CD4-positive, alpha-beta T cell (primary cell): ENCODE measurements at regions of chr6 and their contacts with region 1.

Region 1: DNA sequence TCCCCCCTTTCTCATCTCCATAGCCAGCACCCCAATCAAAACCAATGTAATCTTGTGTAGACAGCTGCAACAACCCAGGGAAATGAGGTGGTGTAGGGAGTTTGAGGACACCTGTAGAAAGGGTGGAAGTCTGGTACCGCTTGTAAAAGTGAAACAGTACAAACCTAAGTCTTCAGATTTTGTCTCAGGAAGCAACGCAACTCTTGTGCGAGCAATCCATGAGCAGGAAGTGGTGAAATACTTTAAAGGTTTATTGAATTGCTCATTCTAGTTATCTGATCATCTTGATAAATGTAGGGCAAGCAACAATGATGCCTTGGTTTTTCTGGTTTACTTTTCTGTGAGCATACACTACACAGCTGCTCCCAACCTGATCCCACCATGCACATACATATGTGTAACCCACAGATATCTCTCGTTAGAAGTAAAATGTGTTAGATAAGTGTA is 71.1 kb upstream of the THEMIS start:
- DNase-seq: peak; percentile 22 to 91 (median 42)
- ATAC-seq: peak; percentile 88
- H3K4me3 ChIP-seq: peak overlapping the region; percentile 53
- H3K4me3 Mint-ChIP-seq: peak overlapping the region; percentile 90
- H3K27ac ChIP-seq: peak overlapping the region; percentile 67 to 84
- H3K27ac Mint-ChIP-seq: peak overlapping the region; percentile 97
- H3K4me1 ChIP-seq: peaks cover 17% of the 10 kb centered on the region
- H3K4me1 Mint-ChIP-seq: peaks cover 75% of the 10 kb centered on the region
- H3K27me3 ChIP-seq: no peaks in the 10 kb centered on the region
- H3K27me3 Mint-ChIP-seq: no peaks in the 10 kb centered on the region
- CTCF ChIP-seq: no peak

Region 2: DNA sequence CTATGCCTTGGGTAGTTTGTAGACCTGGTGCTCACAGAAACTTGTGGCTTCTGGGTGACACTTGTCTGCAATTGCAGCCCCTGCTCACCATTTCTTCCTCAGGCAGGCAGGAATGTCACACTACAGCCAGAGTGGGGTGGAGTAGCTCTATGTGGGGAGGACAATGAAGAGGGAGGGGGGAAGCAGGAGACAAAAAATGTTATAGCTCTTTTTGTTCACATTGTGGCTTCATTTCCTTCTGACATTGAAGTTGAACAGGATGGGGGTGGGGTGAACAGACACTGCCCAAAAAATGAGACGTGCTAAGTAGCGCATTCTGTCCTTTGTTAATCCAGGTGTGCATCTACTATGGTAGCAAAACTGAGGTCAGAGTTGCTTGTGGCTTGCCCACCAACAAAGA is 71.0 kb before region 1 on chr6 and contains the start of gene THEMIS:
- CTCF ChIA-PET with region 1: no interaction called
- POLR2A ChIA-PET with region 1: interaction called, 12 read pairs
- intact Hi-C with region 1: loop called in 1 of 2 experiments (anchors 1 kb)
- DNase-seq: peak in 13 of 14 experiments; percentile 22 to 89 (median 44)
- ATAC-seq: peak; percentile 75
- H3K4me3 ChIP-seq: peak within 1 kb of the TSS; percentile 71
- H3K4me3 Mint-ChIP-seq: peak within 1 kb of the TSS; percentile 98
- H3K27ac ChIP-seq: peak within 1 kb of the TSS; percentile 48 to 61
- H3K27ac Mint-ChIP-seq: peak within 1 kb of the TSS; percentile 91
- H3K4me1 ChIP-seq: peaks cover 13% of the 10 kb centered on the region
- H3K4me1 Mint-ChIP-seq: peaks cover 72% of the 10 kb centered on the region
- H3K27me3 ChIP-seq: no peaks in the 10 kb centered on the region
- H3K27me3 Mint-ChIP-seq: no peaks in the 10 kb centered on the region
- CTCF ChIP-seq: no peak
- total RNA-seq, gene THEMIS: 25.0 to 25.3 TPM

Region 3: DNA sequence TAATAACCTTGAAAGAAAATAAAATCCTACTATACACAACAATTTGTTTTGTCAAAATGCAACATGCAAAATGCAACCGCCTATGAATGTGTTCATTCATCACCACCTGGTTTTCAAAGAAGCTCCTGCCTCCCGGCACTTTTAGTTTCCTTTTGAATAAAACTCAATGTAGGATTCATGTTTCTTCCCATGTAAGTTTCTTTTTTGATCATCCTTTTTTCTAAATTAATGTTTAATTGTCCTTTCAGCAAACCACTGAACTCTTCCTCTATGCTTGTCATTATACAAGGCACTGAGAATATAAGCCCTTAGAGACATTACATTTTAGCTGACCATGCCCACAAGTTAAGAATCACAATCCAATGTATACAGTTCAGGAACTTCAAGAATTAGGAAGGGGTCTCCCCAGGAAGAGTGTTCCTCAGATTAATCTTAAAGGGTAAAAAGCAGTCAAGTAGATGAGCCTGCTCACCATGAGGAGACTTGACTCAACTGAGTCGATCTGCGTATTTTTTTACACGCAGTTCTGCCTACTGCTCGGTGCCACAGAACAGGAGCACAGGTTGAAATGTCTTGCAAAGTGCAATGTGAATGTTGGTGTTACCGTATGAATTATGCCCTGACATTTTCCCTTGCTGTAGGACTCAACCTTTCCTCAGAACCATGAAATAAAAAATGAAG is 63.9 kb before region 1 on chr6:
- CTCF ChIA-PET with region 1: no interaction called
- POLR2A ChIA-PET with region 1: interaction called, 15 read pairs
- intact Hi-C with region 1: no loop called
- DNase-seq: peak in 5 of 14 experiments; percentile 10 to 67 (median 53)
- ATAC-seq: peak; percentile 75
- H3K4me3 ChIP-seq: peak overlapping the region; percentile 62
- H3K4me3 Mint-ChIP-seq: peak overlapping the region; percentile 86
- H3K27ac ChIP-seq: peak overlapping the region in 1 of 2 donors; percentile 79
- H3K27ac Mint-ChIP-seq: peak overlapping the region; percentile 94
- H3K4me1 ChIP-seq: peaks cover 10% of the 10 kb centered on the region
- H3K4me1 Mint-ChIP-seq: peaks cover 71% of the 10 kb centered on the region
- H3K27me3 ChIP-seq: no peaks in the 10 kb centered on the region
- H3K27me3 Mint-ChIP-seq: no peaks in the 10 kb centered on the region
- CTCF ChIP-seq: no peak

Region 4: GRCh38 chr6:128554302-128554701 is 582.3 kb after region 1 on chr6:
- CTCF ChIA-PET with region 1: no interaction called
- POLR2A ChIA-PET with region 1: no interaction called
- intact Hi-C with region 1: no loop called
- DNase-seq: no peak
- ATAC-seq: no peak
- H3K4me3 ChIP-seq: no peak overlapping the region
- H3K4me3 Mint-ChIP-seq: no peak overlapping the region
- H3K27ac ChIP-seq: no peak overlapping the region
- H3K27ac Mint-ChIP-seq: no peak overlapping the region
- H3K4me1 ChIP-seq: no peaks in the 10 kb centered on the region
- H3K4me1 Mint-ChIP-seq: no peaks in the 10 kb centered on the region
- H3K27me3 ChIP-seq: no peaks in the 10 kb centered on the region
- H3K27me3 Mint-ChIP-seq: peaks cover 21% of the 10 kb centered on the region
- CTCF ChIP-seq: no peak